Naive thymus-derived CD4-positive, alpha-beta T cell (primary cell): ENCODE measurements at regions of chr2 and their contacts with region 1.

Region 1: DNA sequence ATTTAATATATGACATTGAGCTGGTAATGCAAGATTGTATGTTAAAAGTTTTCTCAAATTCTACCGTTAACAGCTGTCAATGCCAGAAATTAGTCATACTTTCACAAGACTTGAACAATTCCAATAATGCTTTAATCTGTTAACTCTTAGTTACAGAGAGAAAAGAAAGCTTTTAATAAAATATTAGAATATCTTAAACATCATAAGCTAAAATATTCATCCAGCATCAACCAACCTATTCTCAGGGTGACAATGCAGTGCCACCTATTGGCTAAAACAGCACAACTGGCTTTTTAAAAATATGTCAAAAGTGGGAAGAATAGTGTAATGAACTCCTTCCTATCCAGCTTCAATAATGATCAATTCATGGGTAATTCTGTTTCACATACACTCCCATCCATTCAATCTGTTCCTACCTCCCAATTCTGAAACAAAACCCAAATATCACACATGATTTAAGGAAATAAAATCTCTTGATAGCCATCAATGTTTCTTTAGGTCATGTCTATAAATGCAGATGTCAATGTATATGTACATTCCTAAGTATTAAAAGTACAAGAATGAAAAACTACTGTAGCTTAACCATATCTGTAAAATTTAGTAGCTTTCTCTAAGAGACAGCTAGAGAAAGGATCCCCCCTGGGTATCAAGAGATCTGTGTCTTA is 79.8 kb upstream of the CCDC141 start:
- DNase-seq: peak in 5 of 9 donors; percentile 31 to 49 (median 45)
- ATAC-seq: peak; percentile 49
- H3K4me3 ChIP-seq: no peak overlapping the region
- H3K4me3 Mint-ChIP-seq: no peak overlapping the region
- H3K27ac ChIP-seq: no peak overlapping the region
- H3K27ac Mint-ChIP-seq: no peak overlapping the region
- H3K4me1 ChIP-seq: no peaks in the 10 kb centered on the region
- H3K4me1 Mint-ChIP-seq: no peaks in the 10 kb centered on the region
- H3K27me3 ChIP-seq: no peaks in the 10 kb centered on the region
- H3K27me3 Mint-ChIP-seq: no peaks in the 10 kb centered on the region

Region 2: DNA sequence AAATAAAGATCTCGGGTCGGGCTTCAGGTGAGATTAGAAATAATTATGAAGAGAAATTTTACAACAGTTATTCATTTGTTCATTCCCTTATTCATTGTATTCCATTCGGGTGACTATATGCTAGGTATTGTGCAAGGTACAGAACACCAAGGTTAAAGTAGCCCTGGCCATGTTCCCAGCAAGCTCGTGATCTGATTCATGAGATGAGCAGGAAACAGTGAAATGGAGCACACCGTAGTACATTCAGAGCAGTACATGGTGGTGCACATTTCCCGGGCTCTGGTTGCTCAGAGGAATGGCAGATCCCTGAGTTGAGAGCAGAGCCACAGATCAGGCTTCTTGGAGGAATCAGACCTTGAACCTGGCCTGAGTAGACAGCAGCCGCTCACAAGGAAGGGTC is 766.5 kb before region 1 on chr2:
- CTCF ChIA-PET with region 1: no interaction called
- POLR2A ChIA-PET with region 1: no interaction called
- intact Hi-C with region 1: no loop called
- DNase-seq: no peak
- ATAC-seq: no peak
- H3K4me3 ChIP-seq: no peak overlapping the region
- H3K4me3 Mint-ChIP-seq: no peak overlapping the region
- H3K27ac ChIP-seq: no peak overlapping the region
- H3K27ac Mint-ChIP-seq: no peak overlapping the region
- H3K4me1 ChIP-seq: no peaks in the 10 kb centered on the region
- H3K4me1 Mint-ChIP-seq: no peaks in the 10 kb centered on the region
- H3K27me3 ChIP-seq: no peaks in the 10 kb centered on the region
- H3K27me3 Mint-ChIP-seq: peaks cover 4 to 19% (median 9%) of the 10 kb centered on the region in 5 donors

Region 3: DNA sequence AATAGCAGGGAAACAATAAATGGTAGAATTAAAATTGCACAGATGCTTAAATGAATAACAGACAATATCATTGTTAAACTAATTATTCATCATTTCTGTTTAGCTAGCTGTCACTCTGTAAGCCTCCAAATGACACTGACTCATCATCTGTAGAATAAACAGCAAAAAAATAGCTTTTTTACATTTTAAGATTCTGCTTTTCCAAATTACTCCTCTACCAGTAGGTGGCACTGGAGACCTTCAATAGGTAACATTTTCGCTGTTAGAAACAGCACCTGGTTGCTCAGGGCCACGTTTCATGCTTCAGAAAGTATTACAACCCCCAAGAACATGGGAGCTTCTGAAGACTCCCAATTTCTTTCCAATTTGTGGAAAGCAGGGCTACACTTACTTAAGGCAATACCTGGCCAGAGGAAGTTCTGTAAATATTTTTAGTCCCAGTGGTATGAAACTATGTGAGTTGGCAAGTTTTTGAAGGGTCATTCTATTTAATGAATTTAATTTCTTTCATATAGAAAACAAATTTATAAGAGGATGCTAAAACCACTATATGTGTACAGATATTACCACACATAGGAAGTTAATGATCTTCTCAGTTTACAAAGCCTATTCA is 367.8 kb before region 1 on chr2:
- CTCF ChIA-PET with region 1: interaction called, 3 read pairs
- POLR2A ChIA-PET with region 1: no interaction called
- intact Hi-C with region 1: loop called (anchors 1 to 2 kb)
- DNase-seq: peak in 6 of 9 donors; percentile 13 to 47 (median 38)
- ATAC-seq: peak; percentile 52
- H3K4me3 ChIP-seq: no peak overlapping the region
- H3K4me3 Mint-ChIP-seq: no peak overlapping the region
- H3K27ac ChIP-seq: no peak overlapping the region
- H3K27ac Mint-ChIP-seq: no peak overlapping the region
- H3K4me1 ChIP-seq: no peaks in the 10 kb centered on the region
- H3K4me1 Mint-ChIP-seq: peaks cover 0 to 2% (median 0%) of the 10 kb centered on the region in 7 donors
- H3K27me3 ChIP-seq: no peaks in the 10 kb centered on the region
- H3K27me3 Mint-ChIP-seq: no peaks in the 10 kb centered on the region

Region 4: GRCh38 chr2:178891265-178891958 is 238.3 kb before region 1 on chr2:
- CTCF ChIA-PET with region 1: interaction called, 44 read pairs
- POLR2A ChIA-PET with region 1: no interaction called
- intact Hi-C with region 1: loop called (anchors 1 kb)
- DNase-seq: peak; percentile 9 to 65 (median 49)
- ATAC-seq: peak; percentile 83
- H3K4me3 ChIP-seq: no peak overlapping the region
- H3K4me3 Mint-ChIP-seq: no peak overlapping the region
- H3K27ac ChIP-seq: no peak overlapping the region
- H3K27ac Mint-ChIP-seq: no peak overlapping the region
- H3K4me1 ChIP-seq: no peaks in the 10 kb centered on the region
- H3K4me1 Mint-ChIP-seq: peaks cover 5 to 17% (median 7%) of the 10 kb centered on the region in 7 donors
- H3K27me3 ChIP-seq: no peaks in the 10 kb centered on the region
- H3K27me3 Mint-ChIP-seq: no peaks in the 10 kb centered on the region

Region 5: GRCh38 chr2:178962805-178963433 is 166.8 kb before region 1 on chr2:
- CTCF ChIA-PET with region 1: interaction called, 10 read pairs
- POLR2A ChIA-PET with region 1: no interaction called
- intact Hi-C with region 1: loop called in 1 of 2 experiments (anchors 1 kb)
- DNase-seq: peak in 2 of 9 donors; percentile 14 to 16
- ATAC-seq: no peak
- H3K4me3 ChIP-seq: no peak overlapping the region
- H3K4me3 Mint-ChIP-seq: no peak overlapping the region
- H3K27ac ChIP-seq: no peak overlapping the region
- H3K27ac Mint-ChIP-seq: no peak overlapping the region
- H3K4me1 ChIP-seq: no peaks in the 10 kb centered on the region
- H3K4me1 Mint-ChIP-seq: peaks cover 0 to 5% (median 0%) of the 10 kb centered on the region in 7 donors
- H3K27me3 ChIP-seq: no peaks in the 10 kb centered on the region
- H3K27me3 Mint-ChIP-seq: no peaks in the 10 kb centered on the region

Region 6: DNA sequence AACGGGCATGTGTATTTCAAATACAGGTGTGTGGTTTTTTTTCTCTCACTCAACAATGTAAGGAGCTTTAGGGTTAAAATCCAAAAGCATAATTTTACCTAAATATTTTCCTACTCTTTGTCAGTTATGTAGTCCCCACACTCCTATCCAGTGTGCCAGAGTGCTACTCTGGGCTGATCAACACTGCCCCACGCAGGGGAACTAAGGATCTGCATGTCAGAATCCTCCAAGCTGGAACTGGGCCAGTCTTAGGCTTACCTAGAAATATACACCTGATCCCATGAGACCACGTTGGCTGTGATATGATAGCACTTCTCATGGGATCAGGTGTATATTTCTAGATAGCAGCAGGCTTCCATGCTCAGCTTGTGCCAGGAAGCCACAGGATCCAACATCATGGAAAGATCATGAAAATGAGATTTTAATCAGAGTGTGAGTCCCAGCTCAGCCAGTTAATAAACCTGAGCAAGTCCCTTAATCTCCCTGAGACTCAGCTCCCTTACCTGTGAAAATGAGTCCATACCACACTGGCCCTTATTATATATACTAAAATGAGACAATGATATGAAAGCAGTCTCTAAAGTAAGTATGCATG is 109.5 kb before region 1 on chr2:
- CTCF ChIA-PET with region 1: interaction called, 5 read pairs
- POLR2A ChIA-PET with region 1: no interaction called
- intact Hi-C with region 1: loop called (anchors 1 to 5 kb)
- DNase-seq: peak in 7 of 9 donors; percentile 17 to 44 (median 34)
- ATAC-seq: peak; percentile 80
- H3K4me3 ChIP-seq: no peak overlapping the region
- H3K4me3 Mint-ChIP-seq: no peak overlapping the region
- H3K27ac ChIP-seq: no peak overlapping the region
- H3K27ac Mint-ChIP-seq: no peak overlapping the region
- H3K4me1 ChIP-seq: peaks cover 0 to 10% of the 10 kb centered on the region in 2 donors
- H3K4me1 Mint-ChIP-seq: peaks cover 7 to 37% (median 27%) of the 10 kb centered on the region in 7 donors
- H3K27me3 ChIP-seq: no peaks in the 10 kb centered on the region
- H3K27me3 Mint-ChIP-seq: no peaks in the 10 kb centered on the region

Region 7: DNA sequence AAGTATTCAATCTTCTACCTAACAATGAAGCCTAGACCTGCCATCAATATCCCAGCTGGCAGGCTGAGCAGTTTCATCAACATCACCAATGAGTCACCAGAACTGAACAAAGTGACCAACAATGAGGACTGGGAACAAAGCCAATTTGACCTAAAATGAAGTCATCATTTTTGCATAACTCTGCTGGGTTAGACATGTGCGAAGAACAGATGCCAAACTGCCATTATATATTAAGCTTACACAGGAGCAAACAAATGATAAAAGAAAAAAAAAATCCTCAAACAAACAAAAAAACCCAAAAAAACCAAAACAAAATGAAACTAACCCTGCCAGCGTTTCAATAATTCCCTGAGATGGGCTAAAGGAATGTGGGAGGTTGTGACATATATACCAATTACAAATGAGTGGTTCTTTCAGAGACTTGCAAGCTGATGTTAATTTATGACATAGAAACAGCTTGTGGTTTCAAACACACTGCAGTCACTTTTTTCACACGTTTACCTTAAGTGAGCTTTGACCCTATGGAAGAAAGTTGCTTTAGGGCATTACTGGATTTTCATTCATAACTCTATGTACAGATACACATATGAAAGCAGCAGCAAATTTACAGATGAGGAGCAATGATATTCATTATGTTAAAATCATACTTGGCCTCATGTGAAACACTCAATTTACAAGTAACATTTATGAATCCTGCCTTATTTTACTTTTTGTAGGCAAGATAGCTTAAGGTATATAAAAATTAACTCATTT is 22.9 kb before region 1 on chr2:
- CTCF ChIA-PET with region 1: interaction called, 10 read pairs
- POLR2A ChIA-PET with region 1: no interaction called
- intact Hi-C with region 1: no loop called
- DNase-seq: no peak
- ATAC-seq: peak; percentile 36
- H3K4me3 ChIP-seq: no peak overlapping the region
- H3K4me3 Mint-ChIP-seq: peak overlapping the region in 4 of 10 donors; percentile 7 to 70 (median 50)
- H3K27ac ChIP-seq: no peak overlapping the region
- H3K27ac Mint-ChIP-seq: peak overlapping the region in 6 of 9 donors; percentile 25 to 87 (median 50)
- H3K4me1 ChIP-seq: peaks cover 0 to 18% of the 10 kb centered on the region in 2 donors
- H3K4me1 Mint-ChIP-seq: peaks cover 10 to 41% (median 26%) of the 10 kb centered on the region in 7 donors
- H3K27me3 ChIP-seq: no peaks in the 10 kb centered on the region
- H3K27me3 Mint-ChIP-seq: no peaks in the 10 kb centered on the region

Region 8: GRCh38 chr2:180722551-180723239 is 1593.0 kb after region 1 on chr2:
- CTCF ChIA-PET with region 1: no interaction called
- POLR2A ChIA-PET with region 1: no interaction called
- intact Hi-C with region 1: no loop called
- DNase-seq: no peak
- ATAC-seq: no peak
- H3K4me3 ChIP-seq: no peak overlapping the region
- H3K4me3 Mint-ChIP-seq: no peak overlapping the region
- H3K27ac ChIP-seq: no peak overlapping the region
- H3K27ac Mint-ChIP-seq: no peak overlapping the region
- H3K4me1 ChIP-seq: no peaks in the 10 kb centered on the region
- H3K4me1 Mint-ChIP-seq: no peaks in the 10 kb centered on the region
- H3K27me3 ChIP-seq: no peaks in the 10 kb centered on the region
- H3K27me3 Mint-ChIP-seq: peaks cover 0 to 6% (median 5%) of the 10 kb centered on the region in 5 donors